ENCODE measurements at regions of chr1 and their contacts with region 1.

Region 1: DNA sequence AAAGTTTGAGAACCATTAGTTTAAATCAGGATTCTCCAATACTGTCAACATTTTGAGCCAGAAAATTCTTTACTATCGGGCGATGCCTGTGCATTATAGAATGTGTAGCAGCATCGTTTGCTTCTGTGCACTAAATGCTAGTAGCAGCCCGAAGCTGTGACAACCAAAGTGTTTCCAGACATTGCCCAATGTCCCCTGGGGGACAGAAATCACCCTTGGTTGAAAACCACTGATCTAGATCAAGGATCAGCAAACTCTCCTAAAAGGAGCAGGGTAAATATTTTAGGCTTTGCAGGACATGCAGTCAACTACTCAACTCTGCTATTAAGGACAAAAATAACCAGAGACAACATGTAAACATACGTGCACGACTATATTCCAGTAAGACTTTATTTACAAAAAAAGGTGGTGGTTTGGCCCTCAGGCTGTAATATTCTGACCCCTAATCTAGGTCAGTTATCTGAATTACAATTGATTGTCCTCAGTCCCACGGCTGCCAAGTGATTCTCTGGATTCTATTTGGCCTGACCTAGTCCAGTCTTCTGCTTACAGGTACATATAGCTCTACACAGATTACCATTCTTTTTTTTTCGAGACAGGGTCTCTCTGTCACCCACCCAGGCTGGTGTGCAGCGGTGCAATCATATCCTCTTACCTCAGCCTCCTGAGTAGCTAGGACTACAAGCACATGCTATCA is 10.6 kb downstream of the FAF1 start:
- DNase-seq: no peak
- H3K4me3 ChIP-seq: no peak overlapping the region
- H3K27ac ChIP-seq: no peak overlapping the region
- H3K4me1 ChIP-seq: no peaks in the 10 kb centered on the region
- H3K27me3 ChIP-seq: no peaks in the 10 kb centered on the region
- CTCF ChIP-seq: no peak
- POLR2A ChIP-seq: no peak

Region 2: GRCh38 chr1:50893466-50893865 is 56.0 kb before region 1 on chr1:
- intact Hi-C with region 1: no loop called
- DNase-seq: no peak
- H3K4me3 ChIP-seq: no peak overlapping the region
- H3K27ac ChIP-seq: no peak overlapping the region
- H3K4me1 ChIP-seq: no peaks in the 10 kb centered on the region
- H3K27me3 ChIP-seq: no peaks in the 10 kb centered on the region
- CTCF ChIP-seq: no peak
- POLR2A ChIP-seq: no peak

Region 3: DNA sequence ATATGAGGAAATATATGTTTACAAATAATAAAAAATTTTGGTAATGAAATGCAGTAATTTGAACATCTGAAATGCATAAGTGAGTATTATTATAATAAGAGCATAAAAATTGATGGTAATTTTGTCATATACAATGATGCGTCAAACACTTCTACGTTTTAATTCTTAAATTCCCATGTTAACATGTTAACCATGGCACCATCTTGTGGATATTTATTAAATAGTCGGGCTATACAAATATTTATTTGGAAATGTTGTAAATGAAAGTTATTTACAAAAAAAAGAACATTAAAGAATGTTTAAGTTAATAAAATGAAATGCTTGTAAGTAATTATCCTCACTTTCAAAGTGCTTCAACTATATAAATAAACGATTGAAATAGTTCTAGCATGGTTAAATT is 95.4 kb after region 1 on chr1:
- intact Hi-C with region 1: loop called (anchors 10 kb)
- DNase-seq: no peak
- H3K4me3 ChIP-seq: no peak overlapping the region
- H3K27ac ChIP-seq: no peak overlapping the region
- H3K4me1 ChIP-seq: no peaks in the 10 kb centered on the region
- H3K27me3 ChIP-seq: no peaks in the 10 kb centered on the region
- CTCF ChIP-seq: peak in 3 of 4 experiments; percentile 5 to 26 (median 21)
- POLR2A ChIP-seq: no peak